Activated CD4-positive, alpha-beta memory T cell treated with anti-CD3 and anti-CD28 coated beads, Interleukin-2, amount 10 ng/mL, durations not matched to agents 7 days and 5 days (primary cell): ENCODE measurements at regions of chr4 and their contacts with region 1.

Region 1: GRCh38 chr4:77819843-77820648 is 878 bp upstream of the CNOT6L start:
- DNase-seq: peak; percentile 95
- H3K4me3 Mint-ChIP-seq: peak overlapping the region; percentile 96
- H3K27ac Mint-ChIP-seq: peak overlapping the region; percentile 100
- H3K4me1 Mint-ChIP-seq: peaks cover 45% of the 10 kb centered on the region
- H3K27me3 Mint-ChIP-seq: no peaks in the 10 kb centered on the region

Region 2: DNA sequence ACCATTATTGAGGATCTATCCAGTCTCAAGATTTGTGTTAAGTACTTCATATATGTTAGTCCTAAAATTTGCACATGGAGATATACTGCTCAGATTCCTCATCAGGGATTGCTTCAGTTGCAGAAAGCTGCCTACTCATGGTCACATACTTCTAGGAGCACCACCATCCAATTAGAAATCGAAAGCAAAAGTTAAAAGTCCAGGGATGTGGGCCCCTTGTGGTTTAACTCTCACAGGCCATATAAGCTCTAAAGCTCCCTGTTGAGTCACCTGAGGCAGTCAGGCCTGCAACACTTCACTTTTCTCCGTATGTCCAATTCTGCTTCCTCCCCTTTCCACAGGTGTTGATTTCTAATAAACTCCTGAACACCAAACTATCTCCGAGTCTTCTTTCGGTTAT is 85.1 kb before region 1 on chr4:
- CTCF ChIA-PET with region 1: no interaction called
- POLR2A ChIA-PET with region 1: interaction called, 11 read pairs
- DNase-seq: peak; percentile 42
- H3K4me3 Mint-ChIP-seq: peak overlapping the region; percentile 49
- H3K27ac Mint-ChIP-seq: peak overlapping the region; percentile 59
- H3K4me1 Mint-ChIP-seq: peaks cover 49% of the 10 kb centered on the region
- H3K27me3 Mint-ChIP-seq: no peaks in the 10 kb centered on the region

Region 3: DNA sequence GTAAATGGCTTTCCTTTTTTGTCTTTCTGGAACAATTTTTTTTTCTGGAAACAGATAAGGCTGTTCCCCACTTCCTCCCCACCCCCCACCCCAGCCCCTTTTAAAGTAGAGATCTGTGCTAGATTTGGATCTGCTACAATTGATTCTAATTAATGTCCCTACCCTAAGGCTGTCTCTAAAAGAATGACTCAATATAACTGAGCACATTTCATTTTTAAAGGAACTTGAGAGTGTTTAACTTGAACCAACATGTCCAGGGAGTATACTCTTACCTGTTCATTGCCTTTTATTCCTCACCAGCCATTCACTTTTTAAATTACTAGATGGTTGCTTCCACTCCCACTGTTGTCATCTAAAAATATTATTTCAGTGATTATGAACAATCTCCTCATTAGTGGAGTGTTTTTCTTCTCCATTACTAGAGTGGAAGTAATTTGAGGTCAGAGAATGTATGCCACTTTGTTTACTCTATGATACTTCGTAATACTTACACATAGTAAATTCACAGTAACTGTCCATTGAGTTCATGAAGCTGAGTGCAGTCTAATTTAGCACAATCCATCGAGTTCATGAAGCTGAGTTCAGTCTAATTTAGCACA is 13.2 kb after region 1 on chr4:
- CTCF ChIA-PET with region 1: no interaction called
- POLR2A ChIA-PET with region 1: interaction called, 10 read pairs
- DNase-seq: no peak
- H3K4me3 Mint-ChIP-seq: no peak overlapping the region
- H3K27ac Mint-ChIP-seq: no peak overlapping the region
- H3K4me1 Mint-ChIP-seq: no peaks in the 10 kb centered on the region
- H3K27me3 Mint-ChIP-seq: no peaks in the 10 kb centered on the region

Region 4: GRCh38 chr4:77852892-77853495 is 32.9 kb after region 1 on chr4:
- CTCF ChIA-PET with region 1: interaction called, 118 read pairs
- POLR2A ChIA-PET with region 1: interaction called, 611 read pairs
- DNase-seq: peak; percentile 81
- H3K4me3 Mint-ChIP-seq: peak overlapping the region; percentile 73
- H3K27ac Mint-ChIP-seq: peak overlapping the region; percentile 100
- H3K4me1 Mint-ChIP-seq: peaks cover 59% of the 10 kb centered on the region
- H3K27me3 Mint-ChIP-seq: no peaks in the 10 kb centered on the region